ENCODE measurements at regions of chr18 and their contacts with region 1.

Region 1: DNA sequence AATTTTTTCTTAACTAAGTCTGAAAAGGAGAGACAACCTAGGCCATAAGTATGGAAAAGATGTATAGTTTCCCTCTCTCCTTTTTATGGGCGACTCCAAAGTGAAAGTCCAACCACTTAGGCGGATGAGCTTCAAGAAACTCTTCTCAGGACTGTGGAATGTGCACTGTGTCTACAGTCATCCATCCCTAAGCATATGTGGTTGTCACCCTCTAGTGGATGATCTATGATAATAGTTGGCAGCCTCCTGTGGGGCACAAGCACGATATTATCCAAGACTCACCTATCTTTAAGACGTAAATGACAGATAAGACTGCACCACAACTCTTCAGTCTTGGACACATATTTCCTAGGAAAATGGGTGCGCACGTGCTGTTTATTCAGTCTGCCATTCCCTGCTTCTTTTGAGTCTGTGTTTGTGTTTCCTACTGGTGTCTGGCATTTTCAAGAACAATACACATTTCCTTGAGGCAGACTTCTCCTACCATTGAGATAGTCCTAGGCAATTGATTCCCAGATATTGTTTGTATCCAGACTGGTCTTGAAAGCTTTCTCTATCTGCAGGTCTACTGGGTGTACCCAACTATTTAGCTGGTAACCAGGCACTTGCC is 145.5 kb upstream of the CTAGE1 start:
- DNase-seq: peak; percentile 62
- ATAC-seq: peak; percentile 79
- H3K4me3 ChIP-seq: no peak overlapping the region
- H3K27ac ChIP-seq: no peak overlapping the region
- H3K4me1 ChIP-seq: peaks cover 17% of the 10 kb centered on the region
- H3K27me3 ChIP-seq: peaks cover 2 to 11% of the 10 kb centered on the region in 2 experiments; a peak in 4 of 5 replicates
- CTCF ChIP-seq: peak; percentile 88
- EP300 ChIP-seq: no peak
- POLR2A ChIP-seq: no peak
- RAD21 ChIP-seq: peak; percentile 73

Region 2: GRCh38 chr18:21914739-21915319 is 648.4 kb before region 1 on chr18:
- CTCF ChIA-PET with region 1: interaction called, 24 read pairs
- POLR2A ChIA-PET with region 1: no interaction called
- in situ Hi-C with region 1: loop called (anchors 5 kb)
- intact Hi-C with region 1: loop called (anchors 1 kb)
- DNase-seq: peak; percentile 53
- ATAC-seq: peak; percentile 74
- H3K4me3 ChIP-seq: no peak overlapping the region
- H3K27ac ChIP-seq: no peak overlapping the region
- H3K4me1 ChIP-seq: no peaks in the 10 kb centered on the region
- H3K27me3 ChIP-seq: no peaks in the 10 kb centered on the region; a peak in 1 of 5 replicates
- CTCF ChIP-seq: peak; percentile 75
- EP300 ChIP-seq: no peak
- POLR2A ChIP-seq: no peak
- RAD21 ChIP-seq: peak; percentile 70; the same call in 1 of the 2 replicates

Region 3: GRCh38 chr18:22169007-22169864 is 394.0 kb before region 1 on chr18 and contains the start of gene GATA6:
- CTCF ChIA-PET with region 1: no interaction called
- POLR2A ChIA-PET with region 1: no interaction called
- in situ Hi-C with region 1: no loop called
- intact Hi-C with region 1: loop called (anchors 1 kb)
- DNase-seq: peak; percentile 84
- ATAC-seq: peak; percentile 85
- H3K4me3 ChIP-seq: peak within 1 kb of the TSS; percentile 85 to 91 (median 87)
- H3K27ac ChIP-seq: peak within 1 kb of the TSS; percentile 11
- H3K4me1 ChIP-seq: peaks cover 33% of the 10 kb centered on the region
- H3K27me3 ChIP-seq: peaks cover 0 to 33% of the 10 kb centered on the region in 2 experiments; a peak in 3 of 5 replicates
- CTCF ChIP-seq: peak; percentile 76
- EP300 ChIP-seq: no peak
- POLR2A ChIP-seq: peak; percentile 51 to 53; a peak in 2 of 4 replicates
- RAD21 ChIP-seq: peak; percentile 69
- total RNA-seq, gene GATA6: 2.9 and 3.2 TPM in 2 replicates

Region 4: GRCh38 chr18:22378672-22379282 is 184.4 kb before region 1 on chr18:
- CTCF ChIA-PET with region 1: interaction called, 4 read pairs
- POLR2A ChIA-PET with region 1: no interaction called
- in situ Hi-C with region 1: loop called (anchors 10 kb)
- intact Hi-C with region 1: loop called (anchors 10 kb)
- DNase-seq: peak; percentile 25
- ATAC-seq: peak; percentile 83
- H3K4me3 ChIP-seq: no peak overlapping the region
- H3K27ac ChIP-seq: no peak overlapping the region
- H3K4me1 ChIP-seq: no peaks in the 10 kb centered on the region
- H3K27me3 ChIP-seq: no peaks in the 10 kb centered on the region
- CTCF ChIP-seq: peak; percentile 40
- EP300 ChIP-seq: no peak
- POLR2A ChIP-seq: no peak
- RAD21 ChIP-seq: peak; percentile 20; the same call in 1 of the 2 replicates

Region 5: DNA sequence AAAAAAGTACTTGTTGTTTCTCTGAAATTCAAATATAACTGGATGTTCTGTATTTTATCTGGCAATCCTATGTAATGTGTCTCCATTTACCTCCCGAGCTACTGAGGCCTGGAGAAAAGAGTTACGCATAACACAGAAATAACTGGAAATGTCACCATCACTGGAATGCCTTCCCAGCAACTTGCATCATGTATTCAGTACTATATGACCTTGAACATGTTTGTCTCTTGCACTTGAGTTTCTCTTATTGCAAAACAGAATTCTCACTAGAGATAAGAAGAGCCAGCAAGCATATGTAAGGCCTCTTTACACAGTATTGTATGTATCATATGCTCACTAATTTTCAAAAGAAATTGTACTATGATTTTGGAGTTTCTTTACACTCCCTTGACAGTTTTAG is 45.8 kb before region 1 on chr18:
- CTCF ChIA-PET with region 1: no interaction called
- POLR2A ChIA-PET with region 1: no interaction called
- in situ Hi-C with region 1: no loop called
- intact Hi-C with region 1: no loop called
- DNase-seq: no peak
- ATAC-seq: no peak
- H3K4me3 ChIP-seq: no peak overlapping the region
- H3K27ac ChIP-seq: no peak overlapping the region
- H3K4me1 ChIP-seq: no peaks in the 10 kb centered on the region
- H3K27me3 ChIP-seq: no peaks in the 10 kb centered on the region; a peak in 1 of 5 replicates
- CTCF ChIP-seq: no peak
- EP300 ChIP-seq: no peak
- POLR2A ChIP-seq: no peak
- RAD21 ChIP-seq: no peak

Region 6: GRCh38 chr18:22900558-22901238 is 337.5 kb after region 1 on chr18:
- CTCF ChIA-PET with region 1: no interaction called
- POLR2A ChIA-PET with region 1: no interaction called
- in situ Hi-C with region 1: no loop called
- intact Hi-C with region 1: no loop called
- DNase-seq: no peak
- ATAC-seq: no peak
- H3K4me3 ChIP-seq: no peak overlapping the region
- H3K27ac ChIP-seq: no peak overlapping the region
- H3K4me1 ChIP-seq: no peaks in the 10 kb centered on the region
- H3K27me3 ChIP-seq: no peaks in the 10 kb centered on the region
- CTCF ChIP-seq: no peak
- EP300 ChIP-seq: no peak
- POLR2A ChIP-seq: no peak
- RAD21 ChIP-seq: no peak